Vagina (tissue), 2 donors: ENCODE measurements at regions of chr17 and their contacts with region 1.

Region 1: GRCh38 chr17:70144260-70144846 is 25.0 kb upstream of the KCNJ2 start:
- DNase-seq: no peak
- H3K4me3 ChIP-seq: no peak overlapping the region
- H3K27ac ChIP-seq: no peak overlapping the region
- H3K4me1 ChIP-seq: peaks cover 2% of the 10 kb centered on the region
- H3K27me3 ChIP-seq: no peaks in the 10 kb centered on the region
- CTCF ChIP-seq: peak; percentile 50 to 64 (median 56)
- POLR2A ChIP-seq: no peak

Region 2: DNA sequence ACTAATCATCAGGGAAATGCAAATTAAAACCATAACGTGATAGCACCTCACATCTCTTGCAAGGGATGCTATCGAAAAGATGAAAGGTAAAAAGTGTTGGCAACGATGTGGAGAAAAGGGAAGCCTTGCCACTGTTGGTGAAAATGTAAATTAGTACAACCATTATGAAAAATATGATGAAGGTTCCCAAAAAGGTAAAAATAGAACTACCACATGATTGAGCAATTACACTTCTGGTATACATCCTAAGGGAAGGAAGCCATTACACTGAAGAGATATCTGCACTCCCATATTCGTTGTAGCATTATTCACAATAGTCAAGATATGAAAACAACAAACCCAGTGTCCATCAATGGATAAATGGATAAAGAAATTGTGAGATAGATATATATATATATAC is 937.2 kb before region 1 on chr17:
- intact Hi-C with region 1: no loop called
- DNase-seq: no peak
- H3K4me3 ChIP-seq: no peak overlapping the region
- H3K27ac ChIP-seq: no peak overlapping the region
- H3K4me1 ChIP-seq: no peaks in the 10 kb centered on the region
- H3K27me3 ChIP-seq: no peaks in the 10 kb centered on the region
- CTCF ChIP-seq: no peak
- POLR2A ChIP-seq: no peak

Region 3: DNA sequence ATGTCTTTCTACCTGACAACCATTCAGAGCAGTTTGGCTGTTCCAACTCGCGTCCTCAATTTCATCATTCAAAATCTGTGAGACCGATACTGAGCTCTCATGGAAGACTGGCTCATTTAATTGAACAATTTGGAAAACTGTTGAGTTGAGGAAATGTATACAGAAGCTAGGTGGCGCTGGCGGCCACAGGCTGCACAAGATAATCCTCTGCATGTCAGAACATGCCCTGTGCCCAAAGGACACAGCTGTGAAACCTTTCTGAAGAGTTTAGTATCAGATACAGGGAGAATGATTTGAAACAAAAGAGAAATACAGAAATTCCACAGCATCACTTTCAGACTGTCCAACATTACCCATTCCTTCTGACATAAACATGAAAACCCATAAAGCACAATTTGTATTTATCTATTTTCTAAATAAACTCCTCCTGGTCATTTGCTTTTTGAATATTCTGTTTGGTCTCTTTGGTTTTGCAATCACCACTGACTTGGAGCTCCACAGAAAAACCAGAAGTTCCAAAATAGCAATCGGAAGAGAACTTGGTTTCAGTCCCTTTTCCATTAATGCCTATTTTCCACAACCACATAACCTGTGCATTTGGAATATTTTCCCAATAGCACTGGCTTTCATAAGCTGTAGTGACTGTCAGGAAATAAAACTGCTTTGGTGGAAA is 537.1 kb before region 1 on chr17:
- intact Hi-C with region 1: loop called (anchors 10 kb)
- DNase-seq: no peak
- H3K4me3 ChIP-seq: no peak overlapping the region
- H3K27ac ChIP-seq: peak overlapping the region; percentile 34
- H3K4me1 ChIP-seq: peaks cover 36% of the 10 kb centered on the region
- H3K27me3 ChIP-seq: no peaks in the 10 kb centered on the region
- CTCF ChIP-seq: peak; percentile 58 to 78 (median 76)
- POLR2A ChIP-seq: no peak